CD4-positive, alpha-beta memory T cell (primary cell): ENCODE measurements at regions of chr1 and their contacts with region 1.

Region 1: GRCh38 chr1:55375617-55376258 is 160.6 kb upstream of the USP24 start:
- DNase-seq: peak in 4 of 5 donors; percentile 8 to 20 (median 12)
- H3K4me3 ChIP-seq: no peak overlapping the region
- H3K4me3 Mint-ChIP-seq: no peak overlapping the region
- H3K27ac ChIP-seq: no peak overlapping the region
- H3K27ac Mint-ChIP-seq: no peak overlapping the region
- H3K4me1 ChIP-seq: no peaks in the 10 kb centered on the region
- H3K4me1 Mint-ChIP-seq: peaks cover 0 to 13% (median 5%) of the 10 kb centered on the region in 4 donors
- H3K27me3 ChIP-seq: no peaks in the 10 kb centered on the region
- H3K27me3 Mint-ChIP-seq: peaks cover 0 to 1% of the 10 kb centered on the region in 2 donors

Region 2: DNA sequence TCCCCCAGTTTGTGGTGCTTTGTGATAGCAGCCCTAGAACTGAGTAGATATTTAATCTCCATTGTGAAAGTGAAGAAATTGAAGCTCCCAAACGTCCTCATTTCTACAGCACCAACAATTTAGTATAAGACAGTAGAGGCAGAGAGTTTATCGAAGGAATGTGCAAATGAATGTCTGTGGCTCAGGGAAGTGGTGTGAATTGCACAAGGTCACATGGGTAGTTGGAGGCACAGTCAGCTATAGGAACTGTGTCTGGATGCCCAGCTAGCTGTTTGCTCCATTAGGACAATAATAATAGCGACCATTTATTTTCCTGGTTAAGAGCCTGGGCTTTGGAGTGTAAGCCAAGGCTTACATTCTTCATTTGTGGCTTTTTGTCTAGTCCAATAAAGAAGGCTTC is 16.1 kb before region 1 on chr1:
- CTCF ChIA-PET with region 1: interaction called, 10 read pairs
- POLR2A ChIA-PET with region 1: no interaction called
- intact Hi-C with region 1: no loop called
- DNase-seq: no peak
- H3K4me3 ChIP-seq: no peak overlapping the region
- H3K4me3 Mint-ChIP-seq: no peak overlapping the region
- H3K27ac ChIP-seq: no peak overlapping the region
- H3K27ac Mint-ChIP-seq: no peak overlapping the region
- H3K4me1 ChIP-seq: peaks cover 16% of the 10 kb centered on the region
- H3K4me1 Mint-ChIP-seq: peaks cover 11 to 19% (median 15%) of the 10 kb centered on the region in 4 donors
- H3K27me3 ChIP-seq: no peaks in the 10 kb centered on the region
- H3K27me3 Mint-ChIP-seq: peaks cover 1 to 7% of the 10 kb centered on the region in 2 donors